IMR-90 (cell line): ENCODE measurements at regions of chr4 and their contacts with region 1.

Region 1: DNA sequence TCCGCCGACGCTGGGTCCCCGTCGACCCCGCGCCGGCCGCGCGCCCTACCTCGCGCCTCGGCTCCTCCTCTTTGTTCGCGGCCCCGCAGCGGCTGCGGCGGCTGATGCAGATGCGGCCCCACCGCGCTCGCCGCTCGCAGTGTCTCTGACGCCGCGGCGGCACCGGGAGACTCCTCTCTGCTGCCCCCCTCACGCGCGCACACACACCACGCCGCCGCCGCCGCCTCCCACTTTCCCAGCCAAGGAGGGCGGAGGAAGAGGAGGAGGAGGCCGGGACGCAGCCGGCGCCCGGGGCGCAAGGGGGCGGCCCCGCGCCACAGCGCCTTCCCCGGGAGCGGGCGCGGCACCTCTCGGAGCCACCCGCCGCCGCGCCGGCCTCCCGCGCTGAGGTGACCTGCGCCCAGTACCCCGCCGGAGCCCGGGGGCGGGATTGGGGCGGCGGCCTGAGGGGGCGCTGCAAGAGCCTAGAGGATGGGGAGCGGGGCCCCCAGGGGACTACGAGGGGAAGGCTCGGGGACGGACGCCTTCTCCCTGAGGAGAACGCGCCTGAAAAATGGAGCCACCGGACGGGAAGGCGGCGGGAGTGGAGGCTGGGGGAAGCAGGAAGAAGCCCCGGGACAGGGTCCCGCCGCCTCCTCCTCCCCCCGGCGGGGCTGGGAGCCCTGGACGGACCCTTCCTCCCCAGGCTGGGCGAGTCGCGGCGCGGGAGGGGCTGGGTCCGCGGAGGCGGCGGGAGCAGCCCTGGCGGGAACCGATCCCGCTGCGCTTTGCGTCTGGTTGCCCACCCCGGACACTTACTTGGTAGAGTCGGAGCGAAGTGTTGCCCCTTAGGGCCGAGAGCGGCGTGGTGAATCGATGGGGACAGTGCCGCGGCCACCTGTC is at the start of gene SH3RF1:
- DNase-seq: peak; percentile 82
- ATAC-seq: peak; percentile 88
- H3K4me3 ChIP-seq: peak within 1 kb of the TSS; percentile 94
- H3K27ac ChIP-seq: peak within 1 kb of the TSS; percentile 84
- H3K4me1 ChIP-seq: peaks cover 9% of the 10 kb centered on the region
- H3K27me3 ChIP-seq: no peaks in the 10 kb centered on the region
- CTCF ChIP-seq: peak; percentile 45
- POLR2A ChIP-seq: peak; percentile 95
- RAD21 ChIP-seq: peak; percentile 53
- total RNA-seq, gene SH3RF1: 29.8 and 30.0 TPM in 2 replicates

Region 2: GRCh38 chr4:168923526-168924194 is 347.4 kb before region 1 on chr4:
- CTCF ChIA-PET with region 1: no interaction called
- POLR2A ChIA-PET with region 1: no interaction called
- dilution Hi-C with region 1: no loop called
- in situ Hi-C with region 1: no loop called
- intact Hi-C with region 1: loop called (anchors 1 kb)
- DNase-seq: peak; percentile 86
- ATAC-seq: peak; percentile 75
- H3K4me3 ChIP-seq: no peak overlapping the region
- H3K27ac ChIP-seq: no peak overlapping the region
- H3K4me1 ChIP-seq: peaks cover 2% of the 10 kb centered on the region; the same call in 1 of the 2 replicates
- H3K27me3 ChIP-seq: no peaks in the 10 kb centered on the region
- CTCF ChIP-seq: peak; percentile 72
- POLR2A ChIP-seq: no peak
- RAD21 ChIP-seq: peak; percentile 76

Region 3: DNA sequence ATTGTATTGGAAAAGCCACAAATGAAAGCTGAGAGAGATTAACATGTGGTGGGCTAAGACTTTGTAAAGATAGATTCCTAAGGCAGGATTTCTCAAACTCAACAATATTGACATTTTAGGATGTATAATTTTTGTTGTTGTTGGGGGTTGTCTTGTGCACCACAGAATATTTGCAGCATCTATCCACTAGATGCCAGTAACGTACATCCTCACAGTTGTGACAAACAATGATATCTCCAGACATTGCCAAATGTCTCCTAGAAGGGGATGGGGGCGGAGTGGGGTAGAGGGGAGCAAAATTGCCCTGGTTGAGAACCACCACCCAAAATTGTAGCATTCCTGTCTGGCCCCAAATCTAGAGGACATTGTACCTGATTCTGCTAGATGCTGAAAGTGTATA is 246.3 kb before region 1 on chr4:
- CTCF ChIA-PET with region 1: no interaction called
- POLR2A ChIA-PET with region 1: no interaction called
- dilution Hi-C with region 1: no loop called
- in situ Hi-C with region 1: loop called (anchors 10 kb)
- intact Hi-C with region 1: loop called (anchors 2 kb)
- DNase-seq: peak; percentile 59
- ATAC-seq: peak; percentile 95
- H3K4me3 ChIP-seq: no peak overlapping the region
- H3K27ac ChIP-seq: no peak overlapping the region
- H3K4me1 ChIP-seq: no peaks in the 10 kb centered on the region
- H3K27me3 ChIP-seq: 0 out of 2 replicates have a peak, but pooled peaks cover 2% of the 10 kb centered on the region
- CTCF ChIP-seq: peak; percentile 68
- POLR2A ChIP-seq: no peak
- RAD21 ChIP-seq: peak; percentile 79

Region 4: DNA sequence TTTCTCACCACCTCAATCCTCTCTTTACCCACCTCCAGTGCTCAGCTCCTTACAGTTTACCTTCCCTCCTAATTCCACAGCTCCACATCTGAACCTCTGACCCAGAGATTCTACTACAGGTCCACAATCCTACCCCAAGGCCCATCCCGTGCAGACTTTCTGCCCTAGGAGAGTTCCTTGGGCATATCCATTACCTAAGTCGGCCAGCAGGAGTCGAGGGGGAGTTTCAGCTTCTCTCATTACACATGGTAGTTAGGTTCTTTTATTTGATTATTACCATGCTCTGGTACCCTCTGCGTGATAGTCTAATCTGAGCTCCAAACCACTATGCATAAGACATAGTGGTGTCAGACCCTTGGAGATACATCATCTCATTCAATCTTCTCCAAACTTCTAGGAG is 118.2 kb before region 1 on chr4:
- CTCF ChIA-PET with region 1: no interaction called
- POLR2A ChIA-PET with region 1: no interaction called
- dilution Hi-C with region 1: no loop called
- in situ Hi-C with region 1: no loop called
- intact Hi-C with region 1: loop called (anchors 5 kb)
- DNase-seq: no peak
- ATAC-seq: no peak
- H3K4me3 ChIP-seq: no peak overlapping the region
- H3K27ac ChIP-seq: no peak overlapping the region
- H3K4me1 ChIP-seq: peaks cover 18% of the 10 kb centered on the region
- H3K27me3 ChIP-seq: no peaks in the 10 kb centered on the region
- CTCF ChIP-seq: no peak
- POLR2A ChIP-seq: no peak
- RAD21 ChIP-seq: no peak

Region 5: GRCh38 chr4:169404960-169405359 is 133.9 kb after region 1 on chr4:
- CTCF ChIA-PET with region 1: no interaction called
- POLR2A ChIA-PET with region 1: no interaction called
- dilution Hi-C with region 1: no loop called
- in situ Hi-C with region 1: no loop called
- intact Hi-C with region 1: loop called (anchors 5 kb)
- DNase-seq: peak; percentile 26
- ATAC-seq: no peak
- H3K4me3 ChIP-seq: no peak overlapping the region
- H3K27ac ChIP-seq: no peak overlapping the region
- H3K4me1 ChIP-seq: peaks cover 7% of the 10 kb centered on the region
- H3K27me3 ChIP-seq: no peaks in the 10 kb centered on the region
- CTCF ChIP-seq: no peak
- POLR2A ChIP-seq: no peak
- RAD21 ChIP-seq: no peak

Region 6: GRCh38 chr4:169566021-169566818 is 295.2 kb after region 1 on chr4:
- CTCF ChIA-PET with region 1: no interaction called
- POLR2A ChIA-PET with region 1: no interaction called
- dilution Hi-C with region 1: no loop called
- in situ Hi-C with region 1: no loop called
- intact Hi-C with region 1: loop called (anchors 10 kb)
- DNase-seq: peak; percentile 67
- ATAC-seq: peak; percentile 92
- H3K4me3 ChIP-seq: no peak overlapping the region
- H3K27ac ChIP-seq: no peak overlapping the region
- H3K4me1 ChIP-seq: no peaks in the 10 kb centered on the region
- H3K27me3 ChIP-seq: no peaks in the 10 kb centered on the region
- CTCF ChIP-seq: peak; percentile 74
- POLR2A ChIP-seq: no peak
- RAD21 ChIP-seq: peak; percentile 60